PC-3 (cell line): ENCODE measurements at regions of chr2 and their contacts with region 1.

Region 1: GRCh38 chr2:200811336-200812121 is at the start of gene BZW1:
- DNase-seq: peak; percentile 97
- ATAC-seq: peak; percentile 76
- H3K4me3 ChIP-seq: peak within 1 kb of the TSS; percentile 84
- H3K27ac ChIP-seq: peak within 1 kb of the TSS; percentile 97
- H3K4me1 ChIP-seq: peaks cover 41% of the 10 kb centered on the region
- H3K27me3 ChIP-seq: no peaks in the 10 kb centered on the region
- CTCF ChIP-seq: no peak
- total RNA-seq, gene BZW1: 389 and 626 TPM in 2 replicates

Region 2: DNA sequence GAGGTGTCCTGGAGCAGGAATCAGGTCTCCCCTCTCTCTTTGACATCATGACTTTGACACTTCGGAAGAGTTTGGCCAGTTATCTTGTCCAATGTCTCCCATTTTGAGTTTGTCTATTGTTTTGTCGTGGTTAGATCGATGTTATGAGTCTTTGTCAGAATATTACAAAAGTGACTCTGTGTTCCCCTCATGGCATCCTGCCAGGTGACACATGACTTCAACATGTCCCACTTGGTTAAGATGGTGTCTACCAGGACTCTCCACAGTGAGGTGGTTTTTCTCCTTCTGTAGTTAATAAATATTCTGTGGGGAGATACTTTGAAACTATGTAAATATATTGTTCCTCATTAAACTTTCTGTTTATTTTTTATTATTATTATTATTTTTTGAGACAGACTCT is 76.5 kb before region 1 on chr2:
- CTCF ChIA-PET with region 1: interaction called, 3 read pairs
- POLR2A ChIA-PET with region 1: interaction called, 4 read pairs
- intact Hi-C with region 1: loop called (anchors 2 kb)
- DNase-seq: peak; percentile 39
- ATAC-seq: no peak
- H3K4me3 ChIP-seq: no peak overlapping the region
- H3K27ac ChIP-seq: no peak overlapping the region
- H3K4me1 ChIP-seq: peaks cover 4% of the 10 kb centered on the region
- H3K27me3 ChIP-seq: no peaks in the 10 kb centered on the region
- CTCF ChIP-seq: no peak

Region 3: DNA sequence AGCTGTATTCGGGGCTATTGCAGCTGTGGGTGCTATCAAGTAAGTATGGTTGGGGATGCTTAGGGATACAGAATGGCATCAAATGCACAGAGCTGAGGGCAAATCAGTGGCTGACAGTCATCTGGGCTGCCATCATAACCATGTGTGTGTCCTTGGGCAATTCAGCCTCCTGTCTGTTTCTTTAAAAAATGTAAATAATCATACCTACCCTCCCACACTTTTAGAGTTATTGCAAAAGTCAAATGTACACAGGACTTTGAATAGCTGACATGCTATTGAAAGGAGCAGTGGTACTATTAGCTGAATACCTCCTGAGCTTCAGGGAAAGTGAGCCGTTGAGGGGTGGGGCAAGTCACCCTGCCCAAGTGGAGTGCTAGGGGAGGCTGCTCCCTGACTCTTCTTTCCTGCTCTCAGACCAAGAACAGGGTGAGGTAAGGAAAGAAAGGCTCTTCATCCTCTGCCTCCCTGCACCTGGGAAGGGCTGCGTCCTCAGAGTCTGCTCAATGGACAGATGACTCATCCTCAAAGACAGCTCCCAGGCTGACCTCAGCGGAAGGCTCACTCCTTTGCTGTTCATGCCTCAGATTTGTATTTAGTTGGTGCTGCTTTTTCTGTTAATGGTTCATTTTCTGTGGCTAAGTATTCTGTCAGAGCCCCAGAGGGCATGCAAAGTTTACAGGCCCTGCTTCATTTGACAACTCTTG is 54.8 kb before region 1 on chr2:
- CTCF ChIA-PET with region 1: no interaction called
- POLR2A ChIA-PET with region 1: no interaction called
- intact Hi-C with region 1: loop called (anchors 2 kb)
- DNase-seq: peak; percentile 93
- ATAC-seq: peak; percentile 96
- H3K4me3 ChIP-seq: no peak overlapping the region
- H3K27ac ChIP-seq: peak overlapping the region; percentile 93
- H3K4me1 ChIP-seq: peaks cover 62% of the 10 kb centered on the region
- H3K27me3 ChIP-seq: no peaks in the 10 kb centered on the region
- CTCF ChIP-seq: no peak

Region 4: DNA sequence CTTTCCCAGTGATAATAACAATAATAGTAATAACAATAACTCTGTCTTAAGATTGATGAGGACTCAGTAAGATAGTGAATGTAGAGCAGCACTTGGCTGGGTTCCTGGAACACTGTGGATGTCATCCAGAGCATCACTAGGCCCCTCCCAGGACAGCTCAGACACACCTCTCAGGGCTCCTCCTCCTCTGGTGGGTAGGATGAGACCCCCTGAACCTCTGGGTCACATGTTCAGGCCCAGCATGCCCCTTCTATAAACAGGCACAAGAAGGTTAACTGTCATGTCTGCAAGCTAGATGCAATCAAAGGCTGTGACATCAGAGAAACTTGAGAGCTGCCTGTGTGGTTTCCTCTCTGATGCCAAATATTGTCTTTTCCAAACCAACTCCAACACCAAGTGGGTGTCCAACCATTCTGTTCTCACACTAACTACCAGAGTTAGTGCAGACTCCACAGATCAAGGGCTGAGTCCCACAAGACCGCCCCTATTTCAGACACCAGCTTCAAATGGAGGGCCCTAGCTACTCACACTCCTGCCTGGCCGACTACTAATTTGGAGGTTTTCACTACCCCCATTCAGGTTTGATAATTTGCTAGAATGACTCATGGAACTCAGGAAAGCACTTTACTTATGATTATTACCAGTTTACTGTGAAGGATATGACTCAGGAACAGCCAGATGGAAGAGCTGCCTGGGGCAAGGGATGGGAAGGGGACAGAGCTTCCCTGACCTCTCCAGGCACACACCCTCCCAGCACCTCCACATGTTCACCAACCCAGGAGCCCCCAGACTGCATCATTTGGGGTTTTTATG is 46.2 kb before region 1 on chr2:
- CTCF ChIA-PET with region 1: no interaction called
- POLR2A ChIA-PET with region 1: no interaction called
- intact Hi-C with region 1: loop called (anchors 1 kb)
- DNase-seq: peak; percentile 95
- ATAC-seq: peak; percentile 83
- H3K4me3 ChIP-seq: peak overlapping the region; percentile 13; the same call in 1 of the 2 replicates
- H3K27ac ChIP-seq: peak overlapping the region; percentile 98
- H3K4me1 ChIP-seq: peaks cover 64% of the 10 kb centered on the region
- H3K27me3 ChIP-seq: no peaks in the 10 kb centered on the region
- CTCF ChIP-seq: no peak

Region 5: GRCh38 chr2:200787348-200788120 is 24.0 kb before region 1 on chr2:
- CTCF ChIA-PET with region 1: interaction called, 3 read pairs
- POLR2A ChIA-PET with region 1: no interaction called
- intact Hi-C with region 1: loop called (anchors 1 kb)
- DNase-seq: peak; percentile 96
- ATAC-seq: peak; percentile 66
- H3K4me3 ChIP-seq: peak overlapping the region; percentile 50
- H3K27ac ChIP-seq: peak overlapping the region; percentile 98
- H3K4me1 ChIP-seq: peaks cover 61% of the 10 kb centered on the region
- H3K27me3 ChIP-seq: no peaks in the 10 kb centered on the region
- CTCF ChIP-seq: no peak

Region 6: DNA sequence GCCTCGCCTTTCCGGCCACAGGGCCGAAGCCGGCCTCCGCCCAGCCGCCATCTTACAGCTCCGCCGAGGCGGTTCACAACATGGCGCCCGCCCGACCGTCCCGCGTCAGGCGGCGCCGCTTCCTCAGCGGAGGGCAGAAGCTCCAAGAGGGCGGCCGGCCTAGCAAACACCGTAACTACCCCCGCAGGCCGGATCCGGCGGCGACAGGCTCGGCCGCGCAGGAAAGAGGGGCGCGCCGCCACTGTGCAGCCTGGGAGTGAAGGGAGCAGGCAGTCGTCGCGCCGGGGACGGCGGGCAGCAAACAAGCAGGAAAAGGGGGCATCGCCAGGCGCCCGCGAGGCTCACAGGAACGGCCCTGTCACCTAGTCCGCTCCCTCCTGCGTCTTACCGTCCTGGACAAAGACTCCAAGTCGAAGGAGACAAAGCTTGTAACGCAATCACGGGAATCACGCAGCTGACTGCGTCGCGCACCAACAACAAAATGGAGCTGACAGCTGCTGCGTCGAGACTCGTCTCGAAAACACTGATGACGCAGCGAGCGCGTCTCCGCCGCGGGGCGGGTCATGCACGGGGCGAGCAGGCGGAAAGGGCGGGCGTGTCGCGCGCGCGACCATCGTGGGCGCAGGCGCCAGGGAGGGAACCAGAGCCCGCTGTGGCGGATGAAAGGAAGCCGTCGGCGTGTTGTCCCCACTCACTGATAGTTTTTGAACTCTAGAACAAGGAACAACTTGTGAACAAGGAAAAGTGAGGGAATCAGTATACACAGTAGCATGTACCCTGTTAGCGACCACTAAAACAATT is 52.8 kb after region 1 on chr2 and contains the start of gene CLK1:
- CTCF ChIA-PET with region 1: no interaction called
- POLR2A ChIA-PET with region 1: interaction called, 4 read pairs
- intact Hi-C with region 1: loop called (anchors 2 kb)
- DNase-seq: peak; percentile 96
- ATAC-seq: peak; percentile 84
- H3K4me3 ChIP-seq: peak within 1 kb of the TSS; percentile 93
- H3K27ac ChIP-seq: peak within 1 kb of the TSS; percentile 76
- H3K4me1 ChIP-seq: peaks cover 26% of the 10 kb centered on the region
- H3K27me3 ChIP-seq: no peaks in the 10 kb centered on the region
- CTCF ChIP-seq: no peak
- total RNA-seq, gene CLK1: 46.9 and 51.1 TPM in 2 replicates

Region 7: DNA sequence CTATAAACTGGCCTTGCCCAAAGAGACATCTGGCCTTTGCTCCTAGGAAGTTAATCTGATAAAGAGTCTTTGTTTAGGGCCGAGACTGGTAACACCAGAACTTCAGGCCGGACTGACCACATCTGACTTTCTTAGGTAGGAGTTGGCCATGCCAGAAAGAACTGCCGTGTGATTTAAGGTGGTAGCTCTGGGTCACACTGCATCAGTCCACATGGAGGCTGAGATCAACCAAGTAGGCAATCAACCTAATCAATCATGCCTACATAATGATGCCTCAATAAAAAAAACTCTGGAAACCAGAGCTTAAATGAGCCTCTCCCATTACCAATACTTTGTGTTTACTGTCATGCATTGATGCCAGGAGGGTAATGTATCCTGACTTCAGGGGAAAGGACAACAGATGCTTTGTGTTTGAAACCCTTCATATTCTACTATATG is 196.1 kb after region 1 on chr2:
- CTCF ChIA-PET with region 1: no interaction called
- POLR2A ChIA-PET with region 1: no interaction called
- intact Hi-C with region 1: no loop called
- DNase-seq: no peak
- ATAC-seq: no peak
- H3K4me3 ChIP-seq: no peak overlapping the region
- H3K27ac ChIP-seq: no peak overlapping the region
- H3K4me1 ChIP-seq: no peaks in the 10 kb centered on the region
- H3K27me3 ChIP-seq: no peaks in the 10 kb centered on the region
- CTCF ChIP-seq: no peak